Gastrocnemius medialis (tissue), 4 donors: ENCODE measurements at regions of chr17 and their contacts with region 1.

Region 1: GRCh38 chr17:39980351-39981206 is at the start of gene PSMD3:
- DNase-seq: peak; percentile 97 to 99
- ATAC-seq: peak; percentile 98
- H3K4me3 ChIP-seq: peak within 1 kb of the TSS; percentile 88 to 98 (median 94)
- H3K27ac ChIP-seq: peak within 1 kb of the TSS; percentile 94 to 99 (median 96)
- H3K4me1 ChIP-seq: peaks cover 18 to 22% of the 10 kb centered on the region in 2 donors
- H3K27me3 ChIP-seq: peaks cover 0 to 5% (median 2%) of the 10 kb centered on the region in 3 donors
- CTCF ChIP-seq: peak; percentile 79 to 93 (median 89)
- POLR2A ChIP-seq: peak; percentile 94 to 97
- total RNA-seq, gene PSMD3: 211 to 364 (median 329) TPM

Region 2: DNA sequence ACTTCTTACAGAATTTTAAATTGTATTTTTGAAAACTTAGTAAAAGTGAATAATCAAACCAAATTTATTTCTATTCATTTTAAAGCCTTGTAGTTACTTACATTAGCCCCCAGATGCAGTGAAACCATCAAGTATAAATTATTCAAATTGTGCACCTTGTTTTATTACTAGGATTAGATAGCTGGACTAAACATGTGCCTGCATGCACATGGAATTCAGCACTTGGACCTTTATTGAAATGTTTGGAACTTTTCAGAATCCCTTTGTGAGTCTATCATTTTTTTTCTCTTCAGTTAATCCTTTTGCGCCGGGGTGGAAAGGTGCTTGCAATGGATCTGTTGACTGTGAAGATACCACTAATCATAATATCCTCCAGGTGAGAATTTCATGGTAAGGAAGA is 107.8 kb before region 1 on chr17:
- in situ Hi-C with region 1: no loop called
- intact Hi-C with region 1: loop called (anchors 5 kb)
- DNase-seq: no peak
- ATAC-seq: no peak
- H3K4me3 ChIP-seq: no peak overlapping the region
- H3K27ac ChIP-seq: no peak overlapping the region
- H3K4me1 ChIP-seq: no peaks in the 10 kb centered on the region
- H3K27me3 ChIP-seq: peaks cover 10 to 18% (median 13%) of the 10 kb centered on the region in 3 donors
- CTCF ChIP-seq: peak in 1 of 5 experiments; percentile 22
- POLR2A ChIP-seq: no peak

Region 3: GRCh38 chr17:39927101-39927928 is 53.3 kb before region 1 on chr17 and contains the starts of genes LRRC3C and ORMDL3:
- in situ Hi-C with region 1: no loop called
- intact Hi-C with region 1: loop called (anchors 2 kb)
- DNase-seq: peak; percentile 89 to 91
- ATAC-seq: peak; percentile 77 to 82
- H3K4me3 ChIP-seq: peak within 1 kb of the TSS; percentile 96 to 99 (median 98)
- H3K27ac ChIP-seq: peak within 1 kb of the TSS; percentile 90 to 99 (median 96)
- H3K4me1 ChIP-seq: peaks cover 35 to 46% of the 10 kb centered on the region in 2 donors
- H3K27me3 ChIP-seq: no peaks in the 10 kb centered on the region
- CTCF ChIP-seq: peak in 1 of 5 experiments; percentile 11
- POLR2A ChIP-seq: peak; percentile 67 to 84
- total RNA-seq, gene LRRC3C: not detected
- total RNA-seq, gene ORMDL3: 17.3 to 36.2 (median 29.6) TPM

Region 4: DNA sequence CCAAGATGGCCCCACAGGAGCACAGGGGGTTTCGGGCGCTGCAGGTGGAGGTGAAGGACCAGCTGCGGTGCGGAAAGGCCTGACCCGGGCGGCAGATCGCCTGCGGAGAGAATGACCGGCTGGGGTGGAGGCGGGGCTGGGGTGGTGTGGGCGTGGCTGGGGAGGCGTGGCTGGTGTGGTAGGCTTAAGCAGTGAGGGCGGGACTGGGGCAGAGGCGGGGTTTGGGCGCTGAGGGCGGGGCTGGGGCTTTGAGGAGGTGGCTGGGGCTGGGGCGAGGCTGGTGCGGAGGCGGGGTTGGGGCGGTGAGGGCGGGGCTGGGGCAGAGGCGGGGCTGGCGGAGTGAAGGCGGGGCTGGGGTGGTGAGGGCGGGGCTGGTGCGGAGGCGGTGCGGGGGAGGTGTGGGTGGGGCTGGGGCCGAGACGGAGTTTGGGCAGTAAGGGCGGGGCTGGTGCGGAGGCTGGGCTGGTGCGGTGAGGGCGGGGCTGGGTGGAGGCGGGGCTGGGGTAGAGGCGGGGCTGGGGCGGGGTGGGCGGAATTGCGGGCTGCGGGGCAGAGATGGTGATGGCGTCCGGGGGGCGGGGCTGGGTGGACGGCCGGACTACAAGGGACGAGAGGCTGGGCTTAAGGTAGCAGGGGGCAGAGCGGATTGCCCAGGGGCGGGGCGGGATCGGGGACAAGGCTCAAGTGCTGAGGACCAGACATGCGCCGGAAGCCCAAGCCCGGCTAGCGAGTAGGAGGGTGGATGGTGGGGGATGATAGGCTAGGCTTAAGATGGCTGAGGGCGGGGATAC is 27.7 kb before region 1 on chr17:
- in situ Hi-C with region 1: no loop called
- intact Hi-C with region 1: loop called (anchors 1 kb)
- DNase-seq: peak; percentile 97 to 99
- ATAC-seq: peak; percentile 82 to 85
- H3K4me3 ChIP-seq: peak overlapping the region; percentile 50 to 68 (median 52)
- H3K27ac ChIP-seq: peak overlapping the region; percentile 73 to 80 (median 76)
- H3K4me1 ChIP-seq: peaks cover 6 to 8% of the 10 kb centered on the region in 2 donors
- H3K27me3 ChIP-seq: no peaks in the 10 kb centered on the region
- CTCF ChIP-seq: no peak
- POLR2A ChIP-seq: peak in 1 of 2 donors; percentile 4

Region 5: DNA sequence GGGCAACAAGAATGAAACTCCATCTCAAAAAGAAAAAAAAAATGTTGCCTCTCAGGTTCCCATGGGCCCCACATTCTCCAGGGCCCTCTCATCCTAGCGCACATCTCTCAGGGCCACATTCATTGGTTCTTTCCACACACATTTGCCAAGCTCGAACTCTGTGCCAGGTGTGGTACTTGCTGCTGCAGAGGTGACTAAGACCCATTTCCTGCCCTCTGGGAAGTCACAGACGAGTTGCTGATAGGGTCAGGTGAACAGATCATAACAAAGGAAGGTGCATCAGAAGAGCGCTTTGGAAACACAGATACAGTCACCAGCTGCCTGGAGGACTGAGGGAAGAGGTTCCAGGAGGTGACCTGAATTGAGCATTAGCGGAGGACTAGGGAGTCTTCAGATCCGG is 16.8 kb before region 1 on chr17:
- in situ Hi-C with region 1: no loop called
- intact Hi-C with region 1: loop called (anchors 1 kb)
- DNase-seq: no peak
- ATAC-seq: no peak
- H3K4me3 ChIP-seq: no peak overlapping the region
- H3K27ac ChIP-seq: no peak overlapping the region
- H3K4me1 ChIP-seq: peaks cover 0 to 4% of the 10 kb centered on the region in 2 donors
- H3K27me3 ChIP-seq: peaks cover 0 to 2% (median 0%) of the 10 kb centered on the region in 3 donors
- CTCF ChIP-seq: no peak
- POLR2A ChIP-seq: no peak